Activated B cell treated with CpG ODN at 0.5 μM for 24 hours (primary cell): ENCODE measurements at regions of chr3 and their contacts with region 1.

Region 1: GRCh38 chr3:133573054-133573628 is 345 bp upstream of the CDV3 start:
- DNase-seq: peak; percentile 100
- ATAC-seq: peak; percentile 81
- H3K4me3 Mint-ChIP-seq: peak overlapping the region; percentile 85
- H3K27ac Mint-ChIP-seq: peak overlapping the region; percentile 99
- H3K4me1 Mint-ChIP-seq: peaks cover 74% of the 10 kb centered on the region
- H3K27me3 Mint-ChIP-seq: no peaks in the 10 kb centered on the region
- CTCF ChIP-seq: no peak

Region 2: GRCh38 chr3:132416807-132417694 is 1156.1 kb before region 1 on chr3 and contains the start of gene DNAJC13:
- CTCF ChIA-PET with region 1: no interaction called
- POLR2A ChIA-PET with region 1: interaction called, 5 read pairs
- intact Hi-C with region 1: loop called (anchors 1 kb)
- DNase-seq: peak; percentile 93
- ATAC-seq: peak; percentile 89
- H3K4me3 Mint-ChIP-seq: peak within 1 kb of the TSS; percentile 99
- H3K27ac Mint-ChIP-seq: peak within 1 kb of the TSS; percentile 98
- H3K4me1 Mint-ChIP-seq: peaks cover 32% of the 10 kb centered on the region
- H3K27me3 Mint-ChIP-seq: no peaks in the 10 kb centered on the region
- CTCF ChIP-seq: no peak
- total RNA-seq, gene DNAJC13: 35.9 and 39.8 TPM in 2 replicates

Region 3: DNA sequence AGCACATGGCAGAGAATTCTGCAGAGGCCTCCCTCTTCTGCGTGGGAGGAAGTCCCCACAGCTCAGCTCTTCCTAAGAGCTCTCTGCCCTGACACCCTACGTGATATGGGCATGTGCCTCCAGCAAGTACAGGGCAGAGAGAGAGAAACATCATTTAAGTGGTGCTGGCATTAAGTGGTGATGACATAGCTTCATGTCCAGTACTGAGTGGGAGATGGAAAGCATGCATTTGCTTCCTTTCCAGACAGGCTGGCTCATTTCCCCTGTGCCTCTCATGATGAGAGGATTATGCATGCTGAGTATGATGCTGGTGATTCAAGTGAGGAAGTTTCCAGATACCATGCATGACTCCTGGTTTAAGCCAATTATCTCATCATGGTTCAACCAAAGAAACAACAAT is 146.4 kb before region 1 on chr3:
- CTCF ChIA-PET with region 1: interaction called, 7 read pairs
- POLR2A ChIA-PET with region 1: interaction called, 33 read pairs
- intact Hi-C with region 1: loop called (anchors 1 kb)
- DNase-seq: no peak
- ATAC-seq: no peak
- H3K4me3 Mint-ChIP-seq: no peak overlapping the region
- H3K27ac Mint-ChIP-seq: no peak overlapping the region
- H3K4me1 Mint-ChIP-seq: peaks cover 15% of the 10 kb centered on the region
- H3K27me3 Mint-ChIP-seq: no peaks in the 10 kb centered on the region
- CTCF ChIP-seq: no peak

Region 4: DNA sequence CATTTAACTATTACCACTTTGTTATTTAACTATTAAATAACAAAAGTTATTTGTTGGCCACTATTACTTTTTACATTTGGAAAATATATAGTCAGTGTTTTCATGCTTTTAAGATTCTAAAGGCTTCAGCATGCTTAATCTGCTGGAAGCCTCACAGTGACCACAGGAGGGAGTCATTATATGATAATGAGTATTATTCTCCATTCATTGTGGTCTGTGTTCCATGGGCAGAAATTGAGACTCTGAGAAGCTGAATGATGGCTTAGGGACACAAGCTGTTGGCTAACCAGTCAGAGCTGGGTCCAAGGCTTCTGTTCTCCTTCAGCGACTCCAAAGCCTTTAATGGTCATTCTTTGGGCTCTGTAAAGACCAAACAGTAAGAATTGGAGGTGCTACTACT is 108.6 kb before region 1 on chr3:
- CTCF ChIA-PET with region 1: interaction called, 12 read pairs
- POLR2A ChIA-PET with region 1: interaction called, 98 read pairs
- intact Hi-C with region 1: loop called (anchors 1 kb)
- DNase-seq: no peak
- ATAC-seq: no peak
- H3K4me3 Mint-ChIP-seq: no peak overlapping the region
- H3K27ac Mint-ChIP-seq: no peak overlapping the region
- H3K4me1 Mint-ChIP-seq: peaks cover 60% of the 10 kb centered on the region
- H3K27me3 Mint-ChIP-seq: no peaks in the 10 kb centered on the region
- CTCF ChIP-seq: no peak

Region 5: DNA sequence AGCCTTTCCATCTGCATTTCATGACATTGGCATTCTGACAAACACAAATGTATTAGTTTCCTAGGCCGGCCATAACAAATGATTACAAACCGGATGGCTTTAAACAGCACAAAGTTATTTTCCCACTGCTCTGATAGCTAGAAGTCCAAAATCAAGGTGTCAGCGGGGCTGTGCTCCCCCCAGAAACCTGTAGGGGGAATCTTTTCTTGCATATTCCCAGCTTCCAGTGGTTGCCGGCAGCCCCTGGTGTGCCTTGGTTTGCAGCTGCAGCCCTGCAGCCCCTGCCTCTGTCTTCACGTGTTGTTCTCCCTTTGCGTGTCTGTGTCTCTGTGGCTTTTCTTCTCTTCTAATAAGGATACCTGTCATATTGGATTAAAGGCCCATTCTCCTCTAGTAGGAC is 78.7 kb before region 1 on chr3:
- CTCF ChIA-PET with region 1: interaction called, 14 read pairs
- POLR2A ChIA-PET with region 1: interaction called, 60 read pairs
- intact Hi-C with region 1: loop called (anchors 1 kb)
- DNase-seq: no peak
- ATAC-seq: no peak
- H3K4me3 Mint-ChIP-seq: no peak overlapping the region
- H3K27ac Mint-ChIP-seq: no peak overlapping the region
- H3K4me1 Mint-ChIP-seq: peaks cover 35% of the 10 kb centered on the region
- H3K27me3 Mint-ChIP-seq: no peaks in the 10 kb centered on the region
- CTCF ChIP-seq: no peak

Region 6: DNA sequence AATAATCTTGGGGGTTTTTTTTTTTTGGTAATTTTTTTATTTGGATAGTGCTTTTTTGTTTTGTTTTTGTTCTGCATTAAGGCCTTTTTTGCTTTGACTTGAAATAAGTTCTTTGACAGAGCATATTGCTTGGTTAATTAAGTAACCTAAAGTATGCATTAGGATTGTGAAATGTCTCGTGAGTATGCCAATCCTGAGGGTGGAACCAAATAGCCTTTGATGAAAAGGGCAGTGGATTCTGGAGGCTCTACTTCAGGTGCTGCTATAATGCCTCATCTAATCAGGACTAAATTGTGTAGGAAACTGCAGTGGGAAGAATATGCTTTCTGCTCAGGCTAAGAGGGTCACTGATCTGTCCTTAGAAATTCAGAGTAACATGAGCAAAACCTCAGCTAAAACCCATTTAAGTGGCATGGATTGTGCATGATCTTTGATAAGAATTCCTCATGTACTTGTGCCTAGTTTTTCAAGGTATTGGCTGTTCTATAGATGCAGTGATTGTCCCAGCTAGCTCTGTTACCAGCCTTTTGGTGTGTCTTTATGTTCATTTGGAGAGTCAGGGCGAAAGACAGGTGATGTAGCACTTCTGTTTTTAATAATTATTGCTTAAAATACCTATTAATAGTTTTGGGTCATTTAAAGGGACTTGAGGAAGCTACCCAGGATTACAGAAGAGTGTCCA is 15.8 kb after region 1 on chr3:
- CTCF ChIA-PET with region 1: interaction called, 3 read pairs
- POLR2A ChIA-PET with region 1: interaction called, 3 read pairs
- intact Hi-C with region 1: loop called (anchors 2 kb)
- DNase-seq: no peak
- ATAC-seq: no peak
- H3K4me3 Mint-ChIP-seq: no peak overlapping the region
- H3K27ac Mint-ChIP-seq: no peak overlapping the region
- H3K4me1 Mint-ChIP-seq: peaks cover 7% of the 10 kb centered on the region
- H3K27me3 Mint-ChIP-seq: no peaks in the 10 kb centered on the region
- CTCF ChIP-seq: no peak

Region 7: DNA sequence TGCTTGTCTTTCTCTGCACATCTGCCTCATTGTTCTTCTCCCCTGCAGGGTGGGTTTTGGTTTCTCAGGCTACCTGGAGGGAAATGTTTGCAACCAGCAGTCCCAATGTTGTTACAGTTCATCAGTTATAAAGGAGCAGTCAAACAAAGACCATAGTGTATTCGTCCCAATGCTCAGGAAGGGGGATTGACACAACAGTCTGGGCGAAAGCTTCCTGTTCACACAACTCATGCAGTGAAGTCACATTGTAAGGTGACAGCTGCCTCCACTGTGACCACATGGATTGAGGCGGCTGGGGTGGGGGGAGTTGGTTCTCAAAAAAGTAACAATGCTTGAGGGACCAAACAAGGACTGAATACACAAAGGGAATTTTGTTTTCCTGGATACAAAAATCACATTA is 144.3 kb after region 1 on chr3:
- CTCF ChIA-PET with region 1: no interaction called
- POLR2A ChIA-PET with region 1: no interaction called
- intact Hi-C with region 1: no loop called
- DNase-seq: no peak
- ATAC-seq: no peak
- H3K4me3 Mint-ChIP-seq: no peak overlapping the region
- H3K27ac Mint-ChIP-seq: no peak overlapping the region
- H3K4me1 Mint-ChIP-seq: peaks cover 1% of the 10 kb centered on the region
- H3K27me3 Mint-ChIP-seq: peaks cover 3% of the 10 kb centered on the region
- CTCF ChIP-seq: no peak

Region 8: GRCh38 chr3:133805527-133806475 is 232.7 kb after region 1 on chr3 and contains the start of gene SRPRB:
- CTCF ChIA-PET with region 1: no interaction called
- POLR2A ChIA-PET with region 1: no interaction called
- intact Hi-C with region 1: loop called (anchors 1 kb)
- DNase-seq: peak; percentile 89
- ATAC-seq: peak; percentile 98
- H3K4me3 Mint-ChIP-seq: peak within 1 kb of the TSS; percentile 96
- H3K27ac Mint-ChIP-seq: peak within 1 kb of the TSS; percentile 95
- H3K4me1 Mint-ChIP-seq: peaks cover 21% of the 10 kb centered on the region
- H3K27me3 Mint-ChIP-seq: peaks cover 3% of the 10 kb centered on the region
- CTCF ChIP-seq: no peak
- total RNA-seq, gene SRPRB: 36.5 and 38.5 TPM in 2 replicates